ENCODE measurements at regions of chr7 and their contacts with region 1.

Region 1: GRCh38 chr7:107168233-107169119 is at the start of gene HBP1:
- DNase-seq: peak; percentile 99
- ATAC-seq: peak; percentile 80
- H3K4me3 ChIP-seq: peak within 1 kb of the TSS; percentile 88 to 97 (median 95)
- H3K4me3 Mint-ChIP-seq: peak within 1 kb of the TSS; percentile 94
- H3K27ac ChIP-seq: peak within 1 kb of the TSS; percentile 98 to 99
- H3K27ac Mint-ChIP-seq: peak within 1 kb of the TSS; percentile 100
- H3K4me1 ChIP-seq: peaks cover 25 to 37% of the 10 kb centered on the region in 2 donors
- H3K4me1 Mint-ChIP-seq: peaks cover 38% of the 10 kb centered on the region
- H3K27me3 ChIP-seq: no peaks in the 10 kb centered on the region
- H3K27me3 Mint-ChIP-seq: peaks cover 12% of the 10 kb centered on the region
- CTCF ChIP-seq: no peak
- total RNA-seq, gene HBP1: 127 and 137 TPM in 2 replicates

Region 2: DNA sequence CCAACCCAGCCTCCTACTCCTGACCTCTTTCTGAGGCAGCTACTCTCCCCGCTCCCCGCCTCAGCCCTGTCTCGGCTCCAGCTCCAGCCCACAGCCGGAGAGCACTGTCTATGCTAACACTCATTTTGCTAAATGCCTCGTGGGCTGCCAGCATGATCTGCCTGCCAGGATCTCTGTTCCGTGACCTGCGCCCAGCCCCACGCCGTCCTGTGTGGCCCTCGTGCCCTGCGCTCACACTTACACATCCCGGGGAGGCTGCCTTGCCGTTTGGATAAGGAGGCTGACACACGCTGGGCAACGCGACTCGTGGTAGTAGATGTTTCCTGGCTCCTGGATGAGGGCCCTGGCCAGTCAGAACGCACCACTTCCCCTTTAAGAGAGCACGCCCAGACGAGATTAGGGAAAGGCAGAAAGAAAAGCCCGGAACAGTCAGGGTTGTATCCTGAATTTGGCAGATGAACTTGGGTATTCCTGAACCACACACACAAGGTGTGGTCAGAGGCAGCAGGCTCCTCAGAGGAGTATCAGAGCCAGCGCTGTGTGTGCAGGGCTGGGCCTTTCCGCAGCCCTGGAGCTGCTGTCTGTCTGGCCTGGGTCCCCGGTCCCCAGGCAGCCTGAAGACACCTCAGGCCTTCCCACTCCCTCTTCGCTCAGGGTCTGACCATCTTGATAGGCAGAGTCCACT is 1489.5 kb before region 1 on chr7:
- CTCF ChIA-PET with region 1: no interaction called
- POLR2A ChIA-PET with region 1: no interaction called
- intact Hi-C with region 1: loop called (anchors 10 kb)
- DNase-seq: peak; percentile 70
- ATAC-seq: peak; percentile 44
- H3K4me3 ChIP-seq: peak overlapping the region; percentile 48 to 82 (median 65)
- H3K4me3 Mint-ChIP-seq: peak overlapping the region; percentile 96
- H3K27ac ChIP-seq: peak overlapping the region; percentile 56 to 70
- H3K27ac Mint-ChIP-seq: peak overlapping the region; percentile 94
- H3K4me1 ChIP-seq: peaks cover 37 to 45% of the 10 kb centered on the region in 2 donors
- H3K4me1 Mint-ChIP-seq: peaks cover 57% of the 10 kb centered on the region
- H3K27me3 ChIP-seq: no peaks in the 10 kb centered on the region
- H3K27me3 Mint-ChIP-seq: no peaks in the 10 kb centered on the region
- CTCF ChIP-seq: no peak

Region 3: DNA sequence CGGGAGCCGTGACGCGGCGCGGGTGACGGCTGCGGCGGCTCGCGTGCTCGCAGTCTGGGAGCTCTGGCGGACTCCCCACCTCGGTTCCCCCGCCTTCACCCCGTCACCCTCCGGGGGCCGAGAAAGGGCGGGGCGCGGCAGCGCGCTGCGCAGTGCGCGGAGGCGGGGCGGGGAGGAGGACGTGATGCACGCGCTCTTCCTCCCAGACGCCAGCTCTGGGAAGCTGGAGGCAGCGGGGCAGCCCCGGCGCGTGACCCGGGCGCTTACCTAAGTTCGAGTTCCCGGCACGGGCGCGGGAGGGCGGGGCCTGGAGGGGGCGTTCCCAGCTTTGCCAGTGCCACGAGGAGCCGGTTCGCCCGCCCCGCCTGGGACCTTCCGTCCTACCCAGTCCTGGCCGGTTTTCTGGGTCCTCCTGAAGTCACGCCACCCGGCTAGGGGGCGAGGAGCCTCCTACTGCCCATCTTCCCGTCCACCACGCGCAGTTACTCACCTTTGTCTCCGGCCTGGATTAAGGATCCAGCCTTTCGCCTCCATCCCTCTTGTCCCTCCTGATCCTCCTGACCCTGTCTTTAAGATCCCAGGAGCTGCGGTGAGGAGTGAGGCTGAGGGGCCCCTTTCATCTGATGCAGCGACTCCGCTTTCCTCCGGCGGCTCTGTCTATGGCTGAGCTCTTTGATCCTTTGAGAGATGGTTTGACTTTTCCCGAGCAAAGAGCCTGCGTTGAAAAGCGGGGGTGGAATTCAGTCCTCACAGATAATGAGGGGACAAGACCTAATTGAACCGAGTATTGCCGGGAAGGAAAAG is 883.2 kb before region 1 on chr7:
- CTCF ChIA-PET with region 1: no interaction called
- POLR2A ChIA-PET with region 1: interaction called, 24 read pairs
- intact Hi-C with region 1: no loop called
- DNase-seq: peak; percentile 100
- ATAC-seq: peak; percentile 87
- H3K4me3 ChIP-seq: peak overlapping the region; percentile 79 to 100 (median 89)
- H3K4me3 Mint-ChIP-seq: peak overlapping the region; percentile 97
- H3K27ac ChIP-seq: peak overlapping the region; percentile 84 to 87
- H3K27ac Mint-ChIP-seq: peak overlapping the region; percentile 98
- H3K4me1 ChIP-seq: peaks cover 10 to 20% of the 10 kb centered on the region in 2 donors
- H3K4me1 Mint-ChIP-seq: peaks cover 31% of the 10 kb centered on the region
- H3K27me3 ChIP-seq: no peaks in the 10 kb centered on the region
- H3K27me3 Mint-ChIP-seq: no peaks in the 10 kb centered on the region
- CTCF ChIP-seq: no peak

Region 4: DNA sequence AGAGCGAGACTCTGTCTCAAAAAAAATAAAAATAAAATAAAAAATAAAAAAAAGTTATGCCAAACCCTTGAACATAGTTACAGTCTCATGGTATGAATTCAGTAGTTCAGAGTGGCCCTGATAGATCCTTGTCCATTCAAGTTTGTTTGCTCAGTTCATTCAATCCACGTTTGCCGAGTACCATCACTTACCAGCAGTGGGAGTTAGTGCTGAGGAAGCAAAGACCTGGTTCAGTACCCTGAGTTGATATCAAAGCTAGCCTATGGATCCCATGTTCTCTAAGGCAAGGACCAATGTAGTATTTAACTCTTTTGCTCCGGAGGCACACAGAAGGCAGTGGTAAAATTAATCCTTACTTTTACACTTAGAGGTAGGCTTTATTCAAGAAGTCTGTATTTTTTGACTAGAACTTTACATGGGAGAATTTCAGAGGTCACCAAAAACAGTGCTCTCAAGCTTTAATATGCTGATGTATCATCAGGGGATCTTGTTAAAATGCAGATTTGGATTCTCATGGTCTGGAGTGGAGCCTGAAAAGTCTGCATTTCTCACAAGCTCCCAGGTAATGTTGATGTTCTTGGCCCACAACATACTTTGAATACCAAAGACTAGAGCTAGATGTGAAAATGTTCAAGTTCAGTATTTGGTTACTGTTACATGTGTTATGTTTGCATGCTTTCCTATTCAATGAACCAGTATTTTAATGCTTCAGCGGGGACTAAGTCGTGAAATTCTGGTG is 37.8 kb before region 1 on chr7:
- CTCF ChIA-PET with region 1: interaction called, 3 read pairs
- POLR2A ChIA-PET with region 1: interaction called, 22 read pairs
- intact Hi-C with region 1: loop called (anchors 1 kb)
- DNase-seq: no peak
- ATAC-seq: no peak
- H3K4me3 ChIP-seq: no peak overlapping the region
- H3K4me3 Mint-ChIP-seq: no peak overlapping the region
- H3K27ac ChIP-seq: no peak overlapping the region
- H3K27ac Mint-ChIP-seq: no peak overlapping the region
- H3K4me1 ChIP-seq: peaks cover 9 to 15% of the 10 kb centered on the region in 2 donors
- H3K4me1 Mint-ChIP-seq: peaks cover 9% of the 10 kb centered on the region
- H3K27me3 ChIP-seq: no peaks in the 10 kb centered on the region
- H3K27me3 Mint-ChIP-seq: no peaks in the 10 kb centered on the region
- CTCF ChIP-seq: no peak

Region 5: DNA sequence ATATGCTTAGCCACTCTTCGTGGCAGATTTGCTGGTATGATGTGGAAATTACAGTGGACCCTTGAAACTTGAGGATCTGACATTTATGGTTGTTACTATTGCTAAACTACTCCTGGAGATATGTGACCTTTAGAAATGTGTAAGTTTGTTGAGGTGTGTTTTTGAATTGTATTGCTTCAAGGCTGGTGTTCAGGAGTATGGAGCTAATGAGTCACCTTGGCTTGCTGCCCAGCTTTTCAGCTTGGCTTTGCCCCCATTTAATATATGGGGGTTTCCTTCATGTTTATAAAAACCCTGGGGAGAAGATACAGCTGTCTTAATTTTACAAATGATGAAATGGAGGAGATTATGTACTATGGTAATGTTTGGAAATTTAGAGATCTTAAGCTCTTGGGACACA is 11.9 kb after region 1 on chr7:
- CTCF ChIA-PET with region 1: interaction called, 13 read pairs
- POLR2A ChIA-PET with region 1: interaction called, 7 read pairs
- intact Hi-C with region 1: no loop called
- DNase-seq: no peak
- ATAC-seq: no peak
- H3K4me3 ChIP-seq: no peak overlapping the region
- H3K4me3 Mint-ChIP-seq: peak overlapping the region; percentile 0
- H3K27ac ChIP-seq: peak overlapping the region in 1 of 2 donors; percentile 3
- H3K27ac Mint-ChIP-seq: no peak overlapping the region
- H3K4me1 ChIP-seq: peaks cover under 1% of the 10 kb centered on the region in 2 donors
- H3K4me1 Mint-ChIP-seq: peaks cover 22% of the 10 kb centered on the region
- H3K27me3 ChIP-seq: no peaks in the 10 kb centered on the region
- H3K27me3 Mint-ChIP-seq: no peaks in the 10 kb centered on the region
- CTCF ChIP-seq: no peak

Region 6: DNA sequence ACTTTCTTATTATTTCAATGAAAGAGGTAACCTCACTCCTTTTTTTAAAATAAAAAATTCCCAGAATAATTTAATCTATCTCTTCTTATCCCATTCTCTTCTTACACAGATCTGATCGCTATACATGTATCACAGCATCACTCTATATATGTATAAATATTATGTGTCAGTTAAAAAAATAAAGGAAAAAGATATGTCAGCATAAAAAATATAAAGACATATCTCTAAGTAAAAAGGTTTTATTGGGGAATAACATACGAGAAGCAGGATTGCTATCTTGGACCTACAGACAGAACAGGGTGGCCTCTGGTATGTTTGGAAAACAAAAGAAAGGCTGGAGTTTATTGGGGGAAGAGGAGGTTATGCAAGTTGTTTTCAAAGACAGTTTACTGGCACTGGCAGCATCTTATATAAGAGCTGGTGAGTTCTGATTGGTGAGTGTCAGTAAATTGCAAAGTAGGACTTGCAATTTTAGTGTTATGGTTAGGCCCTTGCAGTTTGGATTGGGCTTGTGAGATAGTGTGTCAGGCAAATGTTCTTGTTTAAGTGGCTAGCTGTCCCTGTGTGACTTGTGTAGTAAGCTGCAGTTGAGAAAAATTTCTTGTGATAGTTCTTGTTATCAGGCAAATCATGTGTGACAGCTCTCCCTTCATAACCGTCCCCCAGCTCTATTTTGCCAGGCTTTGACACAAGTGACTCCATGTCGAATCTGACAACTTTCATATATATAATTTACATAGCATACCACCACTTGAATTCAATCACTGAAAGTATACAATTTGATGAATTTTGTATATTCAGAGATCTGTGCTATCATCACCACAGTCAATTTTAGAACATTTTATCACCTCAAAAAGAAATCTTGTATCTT is 118.5 kb after region 1 on chr7:
- CTCF ChIA-PET with region 1: no interaction called
- POLR2A ChIA-PET with region 1: no interaction called
- intact Hi-C with region 1: no loop called
- DNase-seq: no peak
- ATAC-seq: no peak
- H3K4me3 ChIP-seq: no peak overlapping the region
- H3K4me3 Mint-ChIP-seq: no peak overlapping the region
- H3K27ac ChIP-seq: no peak overlapping the region
- H3K27ac Mint-ChIP-seq: no peak overlapping the region
- H3K4me1 ChIP-seq: no peaks in the 10 kb centered on the region
- H3K4me1 Mint-ChIP-seq: no peaks in the 10 kb centered on the region
- H3K27me3 ChIP-seq: no peaks in the 10 kb centered on the region
- H3K27me3 Mint-ChIP-seq: no peaks in the 10 kb centered on the region
- CTCF ChIP-seq: no peak

Region 7: DNA sequence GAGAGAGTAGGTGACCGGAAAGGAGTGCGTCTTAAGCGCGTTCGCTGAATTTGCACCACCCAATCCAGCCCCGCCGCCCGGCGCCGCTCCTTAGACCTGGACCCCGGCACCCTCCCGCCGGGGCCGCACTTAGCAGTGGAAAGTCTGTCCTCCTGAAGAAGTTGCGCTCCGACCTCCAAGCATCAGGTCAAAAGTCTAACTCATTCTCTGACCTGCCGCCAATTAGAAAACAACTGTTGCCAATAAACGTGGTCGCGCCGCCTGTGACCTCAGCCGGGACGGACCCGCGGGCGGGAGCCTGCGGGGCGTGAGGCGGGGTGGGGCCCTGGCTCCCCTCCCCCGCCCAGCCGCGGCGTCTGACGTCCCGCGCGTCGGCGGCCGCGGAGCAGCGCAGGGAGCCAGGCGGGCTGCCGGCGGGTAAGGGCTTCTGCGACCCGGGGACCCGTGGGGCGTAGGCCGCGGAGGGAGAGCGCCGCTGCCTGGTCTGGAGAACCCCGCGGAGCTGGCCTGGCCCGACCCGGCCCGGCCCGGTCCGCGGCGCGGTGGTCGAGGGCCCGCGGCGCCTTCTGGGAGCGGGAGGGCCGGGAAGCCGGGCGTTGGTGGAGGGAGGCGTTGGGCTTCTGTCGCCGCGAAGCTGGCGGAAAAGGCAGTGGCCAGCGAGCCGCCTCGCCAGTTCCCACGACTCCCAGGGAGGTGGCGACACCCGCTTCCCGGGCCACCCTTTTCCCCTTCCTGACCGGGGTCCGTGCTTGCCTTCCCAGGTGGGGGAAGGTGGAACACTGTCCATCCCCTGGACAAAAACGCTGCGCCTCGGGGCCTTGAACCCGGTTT is 411.6 kb after region 1 on chr7 and contains the start of gene BCAP29:
- CTCF ChIA-PET with region 1: no interaction called
- POLR2A ChIA-PET with region 1: no interaction called
- intact Hi-C with region 1: loop called (anchors 5 kb)
- DNase-seq: peak; percentile 87
- ATAC-seq: peak; percentile 98
- H3K4me3 ChIP-seq: peak within 1 kb of the TSS; percentile 75 to 93 (median 85)
- H3K4me3 Mint-ChIP-seq: peak within 1 kb of the TSS; percentile 85
- H3K27ac ChIP-seq: peak within 1 kb of the TSS; percentile 66 to 80
- H3K27ac Mint-ChIP-seq: peak within 1 kb of the TSS; percentile 79
- H3K4me1 ChIP-seq: peaks cover 4 to 7% of the 10 kb centered on the region in 2 donors
- H3K4me1 Mint-ChIP-seq: peaks cover 23% of the 10 kb centered on the region
- H3K27me3 ChIP-seq: no peaks in the 10 kb centered on the region
- H3K27me3 Mint-ChIP-seq: no peaks in the 10 kb centered on the region
- CTCF ChIP-seq: no peak
- total RNA-seq, gene BCAP29: 27.3 and 31.8 TPM in 2 replicates

Region 8: DNA sequence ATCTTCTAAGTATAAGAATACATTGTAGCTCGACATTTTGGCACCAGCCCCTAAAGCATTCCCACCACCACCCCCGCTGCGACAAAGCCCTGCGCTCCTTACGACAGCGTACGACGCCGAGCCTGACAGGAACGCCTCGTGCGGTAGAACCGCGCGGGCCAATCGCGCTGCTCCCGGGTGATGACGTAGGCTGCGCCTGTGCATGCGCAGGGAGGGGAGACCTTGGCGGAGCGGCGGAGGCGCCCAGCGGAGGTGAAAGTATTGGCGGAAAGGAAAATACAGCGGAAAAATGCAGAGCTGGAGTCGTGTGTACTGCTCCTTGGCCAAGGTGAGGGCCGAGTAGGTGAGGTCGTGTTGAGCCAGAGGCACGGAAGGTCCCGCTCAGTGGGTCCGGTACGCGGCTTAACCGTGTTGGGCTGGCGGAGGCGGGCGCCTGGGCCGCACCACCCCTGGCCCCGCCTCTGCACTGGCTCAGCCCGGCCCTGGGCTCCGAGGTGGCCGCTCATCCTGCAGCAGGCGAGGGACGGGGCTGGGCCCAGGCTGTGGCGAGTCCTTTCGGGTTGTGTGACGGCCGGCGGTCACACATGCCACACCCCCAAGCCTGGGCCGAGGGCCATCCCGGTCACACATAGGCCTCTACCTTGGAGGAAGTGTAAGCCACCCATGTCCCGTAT is 722.6 kb after region 1 on chr7 and contains the start of gene DLD:
- CTCF ChIA-PET with region 1: no interaction called
- POLR2A ChIA-PET with region 1: no interaction called
- intact Hi-C with region 1: loop called (anchors 2 kb)
- DNase-seq: peak; percentile 95
- ATAC-seq: peak; percentile 98
- H3K4me3 ChIP-seq: peak within 1 kb of the TSS; percentile 72 to 86 (median 83)
- H3K4me3 Mint-ChIP-seq: peak within 1 kb of the TSS; percentile 99
- H3K27ac ChIP-seq: peak within 1 kb of the TSS; percentile 91 to 97
- H3K27ac Mint-ChIP-seq: peak within 1 kb of the TSS; percentile 97
- H3K4me1 ChIP-seq: peaks cover 9 to 26% of the 10 kb centered on the region in 2 donors
- H3K4me1 Mint-ChIP-seq: peaks cover 46% of the 10 kb centered on the region
- H3K27me3 ChIP-seq: no peaks in the 10 kb centered on the region
- H3K27me3 Mint-ChIP-seq: peaks cover 4% of the 10 kb centered on the region
- CTCF ChIP-seq: no peak
- total RNA-seq, gene DLD: 47.9 and 48.8 TPM in 2 replicates